Heart right ventricle (tissue), 16 donors: ENCODE measurements at regions of chr2 and their contacts with region 1.

Region 1: DNA sequence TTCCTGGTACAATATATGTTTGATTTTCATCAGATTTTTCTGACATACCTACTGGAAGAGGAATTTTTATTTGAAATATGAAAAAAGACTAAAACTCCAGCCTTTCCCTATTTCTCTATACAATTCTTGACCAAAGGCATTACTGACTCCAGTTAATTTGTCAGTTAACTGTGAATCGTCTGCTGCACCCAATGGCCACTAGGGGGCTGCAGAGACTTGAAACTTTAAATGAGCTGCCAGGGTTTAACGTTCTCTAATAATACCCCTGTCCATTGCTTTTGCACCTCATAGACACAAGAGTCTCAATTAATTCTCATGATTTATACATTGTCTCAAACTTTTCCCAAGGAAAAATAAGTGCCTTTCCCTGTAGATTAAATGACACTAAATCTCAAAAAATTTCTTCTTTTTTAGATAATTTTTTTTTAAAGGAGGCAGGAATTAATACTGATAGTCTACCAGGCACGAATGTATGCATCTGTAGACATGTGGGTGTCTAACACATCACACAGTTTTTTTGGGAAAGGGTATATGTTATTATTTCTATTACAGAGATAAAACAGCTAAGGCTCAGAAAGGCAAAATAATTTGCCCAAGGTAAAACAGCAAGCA is 1.8 kb upstream of the ALK start:
- DNase-seq: peak; percentile 25 to 41
- ATAC-seq: peak in 2 of 8 donors; percentile 46
- H3K4me3 ChIP-seq: no peak overlapping the region
- H3K27ac ChIP-seq: no peak overlapping the region
- H3K4me1 ChIP-seq: peaks cover 0 to 32% (median 21%) of the 10 kb centered on the region in 9 donors
- H3K27me3 ChIP-seq: peaks cover 3 to 79% (median 52%) of the 10 kb centered on the region in 7 donors
- CTCF ChIP-seq: peak; percentile 77 to 95 (median 90)

Region 2: DNA sequence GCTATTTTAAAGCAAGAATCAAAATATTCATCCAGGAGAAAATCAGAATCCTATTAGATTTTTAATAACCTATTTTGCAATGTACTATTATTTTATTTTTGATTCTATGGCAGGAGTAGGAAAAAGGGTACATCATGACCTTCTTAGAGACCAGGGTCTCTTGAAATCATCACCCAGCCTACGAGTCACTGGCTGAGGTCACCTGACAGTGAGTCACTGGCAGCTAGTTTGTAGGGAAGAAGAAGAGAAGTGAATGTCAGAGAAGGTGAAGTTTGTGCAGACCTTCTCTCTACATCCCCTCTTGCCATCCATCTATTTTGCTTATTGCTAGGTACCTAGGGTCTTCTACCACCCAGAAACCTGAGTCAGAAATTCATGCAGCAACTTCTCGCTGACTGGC is 146.1 kb before region 1 on chr2:
- intact Hi-C with region 1: no loop called
- DNase-seq: no peak
- ATAC-seq: no peak
- H3K4me3 ChIP-seq: no peak overlapping the region
- H3K27ac ChIP-seq: no peak overlapping the region
- H3K4me1 ChIP-seq: no peaks in the 10 kb centered on the region
- H3K27me3 ChIP-seq: peaks cover 0 to 11% (median 3%) of the 10 kb centered on the region in 7 donors
- CTCF ChIP-seq: no peak

Region 3: DNA sequence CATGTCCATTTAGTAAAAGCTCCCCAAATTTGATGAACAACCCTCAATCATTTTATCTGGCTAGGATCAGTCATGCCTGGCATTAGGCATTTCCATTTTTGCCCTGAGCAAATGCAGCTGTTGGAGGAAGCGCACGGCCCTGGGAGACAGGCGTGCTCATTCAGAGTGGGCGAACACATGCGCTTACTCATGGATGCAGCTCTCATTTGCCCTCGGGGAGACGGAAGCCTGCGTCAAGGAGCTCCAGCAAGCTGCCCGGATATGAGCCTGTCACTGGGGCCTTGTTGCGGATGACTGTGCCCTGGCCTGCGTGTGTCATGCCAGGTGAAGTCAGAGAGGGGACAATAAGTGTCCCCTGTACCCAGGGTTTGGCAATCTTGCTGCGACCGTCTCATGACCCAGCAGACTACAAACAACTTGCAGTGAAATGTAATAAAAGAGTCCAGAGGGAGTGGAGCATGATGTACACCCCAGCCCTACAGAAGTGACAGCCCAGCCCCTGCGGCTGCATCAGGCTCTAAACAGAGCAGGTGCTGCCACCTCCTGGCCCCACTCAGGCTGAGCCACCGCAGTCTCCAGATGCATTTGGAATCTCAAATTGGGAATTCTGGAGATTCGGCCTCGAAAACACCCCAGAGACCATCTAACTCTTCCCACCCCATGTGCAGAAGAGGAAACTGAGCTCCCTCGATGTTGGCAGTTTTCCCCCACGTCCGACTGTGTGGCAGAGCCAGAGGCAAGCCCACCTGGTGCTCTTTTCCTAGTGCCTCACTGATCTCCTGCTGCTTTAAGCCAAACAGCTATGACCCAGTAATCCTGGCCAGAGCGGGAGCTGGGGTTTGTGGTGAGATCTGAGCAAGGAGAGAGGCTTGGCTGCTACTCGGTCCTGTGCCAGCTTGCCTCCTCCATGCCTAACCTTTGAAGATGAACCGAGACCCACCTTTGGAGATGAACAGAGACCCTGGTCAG is 103.2 kb after region 1 on chr2:
- intact Hi-C with region 1: loop called (anchors 1 to 5 kb)
- DNase-seq: peak; percentile 25 to 34
- ATAC-seq: peak; percentile 61 to 84 (median 73)
- H3K4me3 ChIP-seq: no peak overlapping the region
- H3K27ac ChIP-seq: no peak overlapping the region
- H3K4me1 ChIP-seq: no peaks in the 10 kb centered on the region
- H3K27me3 ChIP-seq: peaks cover 0 to 58% (median 21%) of the 10 kb centered on the region in 7 donors
- CTCF ChIP-seq: peak; percentile 30 to 75 (median 64)

Region 4: DNA sequence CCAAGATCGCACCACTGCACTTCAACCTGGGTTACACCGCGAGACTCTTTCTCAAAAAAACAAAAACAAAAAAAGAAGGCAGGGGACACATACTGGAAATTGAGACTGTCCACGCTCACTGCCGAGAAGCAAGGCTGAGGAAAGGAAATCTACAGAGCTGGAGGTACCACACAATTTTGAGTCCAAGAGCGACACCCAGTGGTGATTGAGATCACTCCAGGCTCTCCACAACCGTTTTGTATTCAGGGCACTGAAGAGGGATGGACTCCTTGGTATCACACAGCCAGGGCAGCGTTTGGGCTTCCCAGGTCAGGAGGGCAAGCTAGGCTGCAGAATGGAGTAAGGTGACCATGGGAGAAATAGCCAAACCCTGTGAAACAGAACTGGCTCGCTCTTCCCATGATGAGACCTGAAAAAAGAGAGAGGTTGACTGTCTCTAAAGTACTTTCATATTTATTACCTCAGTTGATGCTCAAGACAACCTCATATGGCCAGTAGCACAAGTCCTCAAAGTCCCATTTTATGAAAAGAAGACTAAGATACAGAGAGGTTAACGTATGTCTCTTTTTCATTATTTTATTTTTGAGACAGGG is 149.1 kb after region 1 on chr2:
- intact Hi-C with region 1: loop called in 8 of 10 experiments (anchors 2 to 10 kb)
- DNase-seq: peak; percentile 17 to 70
- ATAC-seq: peak; percentile 52 to 90 (median 88)
- H3K4me3 ChIP-seq: no peak overlapping the region
- H3K27ac ChIP-seq: no peak overlapping the region
- H3K4me1 ChIP-seq: peaks cover 0 to 8% (median 0%) of the 10 kb centered on the region in 9 donors
- H3K27me3 ChIP-seq: peaks cover 0 to 53% (median 16%) of the 10 kb centered on the region in 7 donors
- CTCF ChIP-seq: peak; percentile 24 to 74 (median 70)

Region 5: GRCh38 chr2:30115141-30115980 is 192.1 kb after region 1 on chr2:
- intact Hi-C with region 1: loop called in 1 of 10 experiments (anchors 5 kb)
- DNase-seq: peak; percentile 72 to 82
- ATAC-seq: peak; percentile 77 to 88 (median 82)
- H3K4me3 ChIP-seq: no peak overlapping the region
- H3K27ac ChIP-seq: no peak overlapping the region
- H3K4me1 ChIP-seq: peaks cover 0 to 8% (median 0%) of the 10 kb centered on the region in 9 donors
- H3K27me3 ChIP-seq: peaks cover 0 to 2% (median 0%) of the 10 kb centered on the region in 7 donors
- CTCF ChIP-seq: peak; percentile 74 to 95 (median 91)